ENCODE measurements at regions of chr7 and their contacts with region 1.

Region 1: GRCh38 chr7:157905651-157906461 is 569.1 kb downstream of the DNAJB6 start:
- DNase-seq: no peak
- ATAC-seq: no peak
- H3K4me3 ChIP-seq: no peak overlapping the region
- H3K4me3 Mint-ChIP-seq: no peak overlapping the region
- H3K27ac ChIP-seq: no peak overlapping the region
- H3K27ac Mint-ChIP-seq: no peak overlapping the region
- H3K4me1 ChIP-seq: peaks cover 0 to 4% of the 10 kb centered on the region in 2 experiments
- H3K4me1 Mint-ChIP-seq: no peaks in the 10 kb centered on the region
- H3K27me3 ChIP-seq: peaks cover 0 to 9% of the 10 kb centered on the region in 2 experiments
- H3K27me3 Mint-ChIP-seq: no peaks in the 10 kb centered on the region

Region 2: GRCh38 chr7:157612664-157613561 is 292.9 kb before region 1 on chr7:
- CTCF ChIA-PET with region 1: no interaction called
- POLR2A ChIA-PET with region 1: no interaction called
- DNase-seq: peak; percentile 42 to 82 (median 68)
- ATAC-seq: peak; percentile 83 to 87 (median 85)
- H3K4me3 ChIP-seq: peak overlapping the region; percentile 64
- H3K4me3 Mint-ChIP-seq: peak overlapping the region; percentile 83 to 87 (median 85)
- H3K27ac ChIP-seq: peak overlapping the region; percentile 61
- H3K27ac Mint-ChIP-seq: peak overlapping the region; percentile 81 to 89
- H3K4me1 ChIP-seq: peaks cover 2 to 35% of the 10 kb centered on the region in 2 experiments
- H3K4me1 Mint-ChIP-seq: peaks cover 20 to 31% (median 22%) of the 10 kb centered on the region in 3 donors
- H3K27me3 ChIP-seq: peaks cover 0 to 3% of the 10 kb centered on the region in 2 experiments
- H3K27me3 Mint-ChIP-seq: no peaks in the 10 kb centered on the region

Region 3: DNA sequence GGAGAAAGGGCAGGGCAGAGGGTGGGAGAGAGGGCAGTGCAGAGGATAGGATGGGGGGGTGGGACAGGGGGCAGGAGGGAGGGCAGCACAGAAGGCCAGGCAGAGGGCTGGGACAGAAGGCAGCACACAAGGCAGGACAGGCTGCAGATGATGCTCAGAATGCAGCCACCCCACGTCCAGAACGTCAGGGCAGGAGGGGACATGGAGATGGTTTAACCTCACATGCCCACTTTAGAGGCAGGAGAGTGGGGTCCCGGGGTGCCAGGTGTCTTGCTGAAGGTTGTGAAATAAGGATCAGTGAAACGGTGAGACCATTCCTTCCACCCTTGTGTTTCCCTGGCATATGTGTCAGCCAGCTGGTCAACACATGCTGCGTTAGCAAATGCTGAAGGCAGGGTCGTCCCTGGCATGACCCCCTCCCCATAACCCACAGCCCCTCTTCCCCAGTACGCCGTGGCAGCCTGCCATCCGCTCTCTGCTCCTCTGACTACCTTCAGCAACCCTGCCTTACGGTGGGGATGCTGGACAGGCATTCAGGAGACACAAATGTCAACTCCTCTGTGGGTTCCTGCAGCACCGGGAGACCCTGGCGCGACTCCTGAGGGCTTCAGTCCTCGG is 23.1 kb after region 1 on chr7:
- CTCF ChIA-PET with region 1: no interaction called
- POLR2A ChIA-PET with region 1: interaction called in 1 of 2 experiments, 10 read pairs
- DNase-seq: no peak
- ATAC-seq: no peak
- H3K4me3 ChIP-seq: no peak overlapping the region
- H3K4me3 Mint-ChIP-seq: no peak overlapping the region
- H3K27ac ChIP-seq: no peak overlapping the region
- H3K27ac Mint-ChIP-seq: no peak overlapping the region
- H3K4me1 ChIP-seq: peaks cover 22 to 26% of the 10 kb centered on the region in 2 experiments
- H3K4me1 Mint-ChIP-seq: peaks cover 12 to 21% (median 20%) of the 10 kb centered on the region in 3 donors
- H3K27me3 ChIP-seq: peaks cover 0 to 32% of the 10 kb centered on the region in 2 experiments
- H3K27me3 Mint-ChIP-seq: peaks cover 0 to 4% of the 10 kb centered on the region in 2 donors

Region 4: DNA sequence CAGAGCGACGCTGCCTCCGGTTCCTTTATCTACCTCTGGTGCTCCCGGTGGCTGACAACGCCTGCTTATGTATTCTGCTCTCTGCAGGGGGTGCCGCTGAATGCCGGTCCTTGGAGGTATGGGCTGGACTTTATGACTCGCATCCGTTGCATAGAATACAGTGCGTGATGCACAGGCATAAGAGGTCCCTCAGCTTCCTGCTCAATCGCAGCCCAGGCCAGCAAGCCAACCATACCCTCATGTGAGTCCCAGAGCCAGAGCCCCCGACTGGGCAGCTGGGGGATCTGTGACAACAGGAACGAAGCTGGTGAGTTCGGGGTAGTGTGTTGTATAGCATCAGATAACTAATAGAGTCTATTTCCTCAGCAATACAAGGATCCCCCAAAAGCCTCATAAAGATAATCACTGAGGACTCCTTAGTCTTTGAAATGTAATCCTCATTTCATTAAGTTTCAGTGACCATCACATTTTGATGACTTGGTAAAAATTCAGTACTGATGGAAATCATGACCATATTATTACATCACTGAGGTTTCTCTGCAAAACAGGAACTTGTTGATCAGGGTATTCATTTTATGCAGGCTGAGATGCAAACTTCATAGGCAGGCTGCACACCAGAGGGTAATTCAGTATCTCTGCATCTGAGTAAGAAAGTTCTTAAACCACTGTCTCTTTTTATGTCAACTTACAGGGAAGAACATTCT is 73.9 kb after region 1 on chr7:
- CTCF ChIA-PET with region 1: no interaction called
- POLR2A ChIA-PET with region 1: no interaction called
- DNase-seq: no peak
- ATAC-seq: no peak
- H3K4me3 ChIP-seq: no peak overlapping the region
- H3K4me3 Mint-ChIP-seq: no peak overlapping the region
- H3K27ac ChIP-seq: no peak overlapping the region
- H3K27ac Mint-ChIP-seq: no peak overlapping the region
- H3K4me1 ChIP-seq: no peaks in the 10 kb centered on the region
- H3K4me1 Mint-ChIP-seq: no peaks in the 10 kb centered on the region
- H3K27me3 ChIP-seq: peaks cover 0 to 16% of the 10 kb centered on the region in 2 experiments
- H3K27me3 Mint-ChIP-seq: peaks cover 2 to 6% of the 10 kb centered on the region in 2 donors